Adrenal gland (tissue), 19 donors: ENCODE measurements at regions of chr7 and their contacts with region 1.

Region 1: GRCh38 chr7:142782922-142783900 is 12.4 kb downstream of the PRSS2 start:
- DNase-seq: peak; percentile 87 to 97 (median 92)
- H3K4me3 ChIP-seq: peak overlapping the region in 1 of 4 donors; percentile 36
- H3K27ac ChIP-seq: no peak overlapping the region
- H3K4me1 ChIP-seq: no peaks in the 10 kb centered on the region
- H3K27me3 ChIP-seq: no peaks in the 10 kb centered on the region
- CTCF ChIP-seq: peak; percentile 89 to 99 (median 98)
- POLR2A ChIP-seq: no peak

Region 2: DNA sequence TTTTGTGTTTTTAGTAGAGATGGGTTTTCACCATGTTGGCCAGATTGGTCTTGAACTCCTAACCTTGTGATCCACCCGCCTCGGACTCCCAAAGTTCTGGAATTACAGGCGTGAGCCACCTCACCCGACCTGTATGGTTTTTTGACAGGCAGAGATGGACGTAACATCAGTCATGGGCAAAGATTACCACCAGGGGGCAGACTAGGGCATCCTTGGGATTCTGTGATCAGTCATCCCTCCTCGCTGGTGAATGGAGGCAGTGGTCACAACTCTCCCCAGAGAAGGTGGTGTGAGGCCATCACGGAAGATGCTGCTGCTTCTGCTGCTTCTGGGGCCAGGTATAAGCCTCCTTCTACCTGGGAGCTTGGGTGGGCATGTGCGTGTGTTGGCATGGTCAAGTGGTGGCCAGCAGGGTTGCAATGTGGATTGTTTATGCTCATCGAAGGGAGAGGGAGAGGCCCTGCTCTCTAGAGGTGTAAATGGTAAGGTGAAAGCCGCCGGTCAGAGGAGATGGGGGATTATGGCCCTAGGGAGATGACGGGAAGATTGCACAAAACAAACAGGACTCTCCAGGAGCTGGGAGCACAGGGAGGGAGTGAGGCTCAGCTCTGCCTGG is 156.7 kb before region 1 on chr7:
- intact Hi-C with region 1: loop called (anchors 5 to 10 kb)
- DNase-seq: peak; percentile 24 to 80 (median 44)
- H3K4me3 ChIP-seq: no peak overlapping the region
- H3K27ac ChIP-seq: no peak overlapping the region
- H3K4me1 ChIP-seq: no peaks in the 10 kb centered on the region
- H3K27me3 ChIP-seq: no peaks in the 10 kb centered on the region
- CTCF ChIP-seq: peak; percentile 24 to 57 (median 45)
- POLR2A ChIP-seq: no peak

Region 3: DNA sequence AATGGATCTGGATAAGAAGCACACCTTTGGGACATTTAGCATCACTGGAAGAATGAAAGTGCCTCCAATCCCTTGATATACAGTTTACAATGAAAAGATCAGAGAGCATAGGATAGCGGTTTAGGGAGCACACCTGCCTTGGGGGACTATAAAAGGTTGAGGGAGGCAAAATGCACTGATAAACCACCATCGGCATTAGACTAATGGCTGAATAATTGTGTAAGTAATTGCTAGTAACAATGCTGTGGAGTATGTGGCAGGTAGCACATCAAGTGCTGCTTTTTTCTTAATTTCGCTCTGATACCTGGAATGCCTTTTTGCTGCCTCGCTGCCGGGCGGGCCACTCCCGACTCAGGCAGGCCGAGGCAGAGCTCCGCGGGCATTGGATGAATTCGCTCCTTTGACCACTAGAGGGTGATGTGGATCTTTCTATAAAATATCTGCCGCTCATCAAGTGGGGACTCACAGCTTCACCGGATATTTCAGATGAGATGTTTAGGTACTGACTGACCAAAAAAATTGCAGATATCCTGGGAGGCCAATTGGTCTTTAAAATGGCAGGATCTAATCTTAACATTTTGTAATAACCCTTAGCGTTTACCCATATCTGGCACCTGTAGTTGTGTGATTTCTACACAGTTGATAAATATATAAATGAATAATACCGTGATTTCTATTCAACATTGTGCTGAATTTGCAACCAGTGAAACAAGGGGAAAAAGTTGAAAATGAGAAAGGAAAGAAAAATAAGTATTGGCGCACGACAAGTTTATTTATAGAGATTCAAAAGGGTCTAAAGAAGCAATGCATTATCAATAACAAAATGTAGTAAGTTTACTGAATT is 150.7 kb before region 1 on chr7:
- intact Hi-C with region 1: loop called (anchors 5 to 10 kb)
- DNase-seq: peak; percentile 21 to 83 (median 55)
- H3K4me3 ChIP-seq: no peak overlapping the region
- H3K27ac ChIP-seq: no peak overlapping the region
- H3K4me1 ChIP-seq: no peaks in the 10 kb centered on the region
- H3K27me3 ChIP-seq: no peaks in the 10 kb centered on the region
- CTCF ChIP-seq: peak; percentile 63 to 81 (median 76)
- POLR2A ChIP-seq: no peak

Region 4: GRCh38 chr7:142711746-142712619 is 71.2 kb before region 1 on chr7:
- intact Hi-C with region 1: loop called in 1 of 2 experiments (anchors 5 kb)
- DNase-seq: peak in 3 of 7 donors; percentile 26 to 32 (median 32)
- H3K4me3 ChIP-seq: no peak overlapping the region
- H3K27ac ChIP-seq: no peak overlapping the region
- H3K4me1 ChIP-seq: no peaks in the 10 kb centered on the region
- H3K27me3 ChIP-seq: no peaks in the 10 kb centered on the region
- CTCF ChIP-seq: peak; percentile 35 to 56 (median 47)
- POLR2A ChIP-seq: no peak